ENCODE measurements at regions of chr1 and their contacts with region 1.

Region 1: DNA sequence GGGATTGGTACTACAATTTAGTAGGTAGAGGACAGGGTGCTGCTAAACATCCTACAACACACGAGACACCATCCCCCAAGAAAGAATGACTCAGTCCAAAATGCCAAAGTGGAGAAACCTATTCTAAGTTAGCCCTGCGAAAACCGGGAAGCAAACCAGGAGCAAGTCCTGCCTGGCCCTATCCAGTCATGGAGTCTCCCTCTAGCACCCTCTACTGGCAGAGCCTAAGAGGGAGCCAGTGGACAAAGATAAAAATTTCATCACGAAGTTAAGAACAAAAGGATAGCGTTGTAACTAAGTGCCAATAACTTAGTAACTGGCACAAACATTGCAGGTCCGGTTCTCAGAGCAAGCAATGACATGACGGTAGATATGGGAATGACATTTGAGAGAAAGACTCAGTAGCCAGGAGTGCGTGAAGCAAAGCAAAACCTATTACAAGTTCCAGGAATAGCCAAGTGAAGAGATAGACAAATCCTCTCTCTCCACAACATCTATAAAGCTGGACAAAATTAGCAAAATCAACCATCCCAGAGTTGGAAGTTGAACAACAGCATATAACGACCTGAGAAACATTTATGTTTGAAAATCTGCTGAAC is 383.5 kb downstream of the OMA1 start:
- DNase-seq: peak; percentile 85
- H3K4me3 Mint-ChIP-seq: no peak overlapping the region
- H3K27ac Mint-ChIP-seq: no peak overlapping the region
- H3K4me1 Mint-ChIP-seq: no peaks in the 10 kb centered on the region
- H3K27me3 Mint-ChIP-seq: no peaks in the 10 kb centered on the region
- CTCF ChIP-seq: peak; percentile 82

Region 2: DNA sequence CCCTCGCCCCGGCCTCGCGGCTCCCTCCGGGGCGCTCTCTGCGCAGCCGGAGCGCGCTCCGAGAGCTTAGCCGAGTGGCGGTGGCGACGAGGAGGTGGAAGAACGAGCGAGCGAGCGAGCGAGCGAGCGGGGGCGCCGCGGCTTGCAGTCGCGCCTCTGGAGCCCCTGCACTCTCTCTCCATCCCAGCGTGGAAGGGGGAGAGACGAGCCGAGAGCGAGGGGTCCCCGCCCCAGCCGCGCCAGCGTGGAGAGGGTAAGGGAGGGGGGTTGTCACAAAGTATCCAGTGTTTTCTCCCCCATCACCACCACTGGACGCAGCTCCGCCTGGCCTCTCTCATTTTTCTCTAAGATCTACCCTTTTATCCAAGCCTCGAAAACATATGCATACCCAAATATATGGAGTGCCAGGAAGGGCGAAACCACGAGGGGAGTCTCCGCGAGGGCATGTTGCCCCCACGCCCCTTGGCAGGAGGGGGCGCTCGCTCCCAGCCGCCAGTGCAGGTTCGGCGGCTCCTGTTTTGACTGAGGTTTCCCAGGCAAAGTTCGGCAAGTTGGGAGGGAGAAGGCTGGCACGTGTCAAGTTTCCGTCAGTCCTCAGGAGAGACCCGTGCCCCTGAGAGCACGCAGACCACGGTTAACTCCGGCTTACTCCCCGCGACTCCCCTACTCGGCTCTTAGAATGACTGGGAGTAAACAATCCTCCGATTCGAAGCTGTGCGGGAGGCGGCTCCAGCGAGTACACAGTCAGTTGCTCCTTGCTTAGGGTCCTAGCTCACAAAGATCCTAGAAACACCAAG is 738.6 kb before region 1 on chr1:
- CTCF ChIA-PET with region 1: no interaction called
- POLR2A ChIA-PET with region 1: no interaction called
- intact Hi-C with region 1: loop called (anchors 5 kb)
- DNase-seq: no peak
- H3K4me3 Mint-ChIP-seq: no peak overlapping the region
- H3K27ac Mint-ChIP-seq: no peak overlapping the region
- H3K4me1 Mint-ChIP-seq: peaks cover 8% of the 10 kb centered on the region
- H3K27me3 Mint-ChIP-seq: peaks cover 69% of the 10 kb centered on the region
- CTCF ChIP-seq: no peak

Region 3: GRCh38 chr1:57835624-57836023 is 327.4 kb before region 1 on chr1:
- CTCF ChIA-PET with region 1: interaction called, 3 read pairs
- POLR2A ChIA-PET with region 1: no interaction called
- intact Hi-C with region 1: loop called (anchors 1 kb)
- DNase-seq: peak; percentile 31
- H3K4me3 Mint-ChIP-seq: no peak overlapping the region
- H3K27ac Mint-ChIP-seq: no peak overlapping the region
- H3K4me1 Mint-ChIP-seq: peaks cover 10% of the 10 kb centered on the region
- H3K27me3 Mint-ChIP-seq: no peaks in the 10 kb centered on the region
- CTCF ChIP-seq: peak; percentile 20